AG04449 (cell line): ENCODE measurements at regions of chr1 and their contacts with region 1.

Region 1: GRCh38 chr1:51192213-51192843 is 43.7 kb upstream of the RNF11 start:
- DNase-seq: peak; percentile 28
- H3K4me3 ChIP-seq: no peak overlapping the region
- CTCF ChIP-seq: peak; percentile 75

Region 2: GRCh38 chr1:50750021-50750619 is 442.2 kb before region 1 on chr1:
- CTCF ChIA-PET with region 1: interaction called, 15 read pairs
- POLR2A ChIA-PET with region 1: no interaction called
- DNase-seq: no peak
- H3K4me3 ChIP-seq: no peak overlapping the region
- CTCF ChIP-seq: peak; percentile 44

Region 3: DNA sequence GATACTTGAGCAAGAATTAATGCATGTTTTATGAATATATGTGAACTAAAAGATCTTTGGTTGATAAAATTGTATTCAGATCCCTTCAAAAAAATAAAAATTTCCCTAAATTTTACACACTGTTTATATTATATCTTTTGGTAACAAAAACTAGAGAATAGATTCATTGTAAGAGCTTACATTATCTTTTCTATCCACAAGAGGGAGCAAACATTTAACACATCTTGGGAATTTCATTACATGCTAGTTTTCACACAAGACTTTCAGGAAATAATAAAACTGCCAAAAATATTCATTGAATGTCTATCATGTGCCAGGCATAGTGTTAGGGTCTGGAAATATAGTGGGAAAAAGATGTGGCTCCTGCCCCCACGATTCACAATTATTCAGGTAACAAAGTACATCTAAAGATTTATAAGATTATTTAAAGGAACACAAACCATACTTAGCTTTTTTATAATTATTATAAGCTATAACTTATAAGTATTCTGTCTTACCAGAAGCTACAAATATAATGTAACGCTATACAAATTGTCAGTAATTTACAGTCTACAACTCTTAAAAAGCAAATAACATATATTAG is 262.9 kb before region 1 on chr1:
- CTCF ChIA-PET with region 1: interaction called, 129 read pairs
- POLR2A ChIA-PET with region 1: no interaction called
- DNase-seq: peak; percentile 5
- H3K4me3 ChIP-seq: no peak overlapping the region
- CTCF ChIP-seq: peak; percentile 20

Region 4: DNA sequence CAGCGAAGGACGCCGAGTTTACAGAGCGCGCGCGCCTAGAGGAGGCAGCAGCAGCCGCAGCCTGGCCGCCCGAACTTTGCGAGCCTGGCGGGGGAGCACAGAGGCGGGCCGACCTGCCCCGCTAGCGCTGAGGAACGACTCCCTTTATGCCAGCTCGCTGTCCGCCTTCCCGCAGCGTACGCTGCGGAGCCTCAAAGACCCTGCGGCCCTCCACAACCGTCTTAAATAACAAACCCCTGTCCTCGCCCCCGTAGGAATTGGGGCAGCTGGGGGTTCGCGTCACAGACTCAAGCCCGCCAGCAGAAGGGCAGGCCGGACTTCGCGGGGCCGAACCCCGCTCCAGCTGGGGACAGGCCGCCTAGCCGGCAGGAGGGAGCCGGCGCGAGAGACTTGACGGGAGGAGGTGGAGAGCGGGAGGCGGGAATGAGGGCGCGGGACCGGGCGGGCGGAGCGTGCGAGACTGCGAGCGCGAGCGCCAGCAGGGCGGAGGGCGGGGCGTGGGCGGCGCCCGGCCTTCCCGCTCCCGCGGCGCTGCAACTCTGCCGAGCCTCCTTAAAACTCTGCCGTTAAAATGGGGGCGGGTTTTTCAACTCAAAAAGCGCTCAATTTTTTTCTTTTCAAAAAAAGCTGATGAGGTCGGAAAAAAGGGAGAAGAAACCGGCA is 224.0 kb before region 1 on chr1:
- CTCF ChIA-PET with region 1: interaction called, 17 read pairs
- POLR2A ChIA-PET with region 1: no interaction called
- DNase-seq: no peak
- H3K4me3 ChIP-seq: peak overlapping the region; percentile 83
- CTCF ChIP-seq: peak; percentile 56

Region 5: DNA sequence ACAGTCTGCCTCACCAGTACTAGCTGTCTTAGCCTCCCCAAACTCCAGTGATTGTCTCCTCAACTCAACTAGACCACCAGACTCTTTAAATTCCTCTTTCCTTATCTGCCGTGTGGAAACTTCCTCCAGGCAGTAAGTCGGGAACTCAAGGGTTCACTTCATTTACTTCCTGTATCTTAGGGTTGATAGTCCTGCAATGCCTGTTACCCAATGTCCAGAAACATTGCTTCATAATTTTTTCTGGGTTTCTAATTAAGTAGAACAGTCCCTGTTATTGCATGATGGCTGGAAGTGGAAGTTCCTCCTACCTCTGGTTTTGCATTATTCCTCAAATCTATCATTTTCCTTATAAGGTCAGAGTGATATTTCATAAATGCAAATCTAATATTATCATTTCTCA is 17.1 kb before region 1 on chr1:
- CTCF ChIA-PET with region 1: interaction called, 64 read pairs
- POLR2A ChIA-PET with region 1: no interaction called
- DNase-seq: no peak
- H3K4me3 ChIP-seq: no peak overlapping the region
- CTCF ChIP-seq: no peak

Region 6: DNA sequence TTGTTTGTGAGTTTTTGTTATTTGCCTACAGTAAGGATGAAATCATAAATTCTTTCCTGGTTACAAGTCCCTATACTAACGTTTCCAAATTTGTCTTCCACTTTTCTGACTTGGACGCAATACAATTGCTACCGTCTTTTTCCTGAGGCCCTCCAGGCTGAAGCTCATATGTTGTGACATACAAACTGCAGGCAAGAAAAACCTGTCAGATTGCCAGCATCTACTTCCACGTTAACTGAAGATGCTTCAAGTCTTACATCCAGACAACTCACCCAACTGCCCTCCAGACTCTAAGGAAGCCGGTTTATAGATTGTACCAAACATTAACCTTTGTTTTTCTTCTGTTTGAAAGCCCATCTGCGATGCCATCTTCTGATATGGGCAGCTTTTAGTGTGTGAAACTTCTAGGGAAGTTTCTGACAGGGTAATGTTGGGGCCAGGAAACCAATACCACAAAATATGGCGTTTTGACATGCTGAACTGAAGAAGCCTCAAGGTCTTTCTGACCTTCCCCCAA is 22.3 kb after region 1 on chr1:
- CTCF ChIA-PET with region 1: interaction called, 30 read pairs
- POLR2A ChIA-PET with region 1: no interaction called
- DNase-seq: peak; percentile 65
- H3K4me3 ChIP-seq: no peak overlapping the region
- CTCF ChIP-seq: no peak

Region 7: GRCh38 chr1:51535006-51535592 is 342.8 kb after region 1 on chr1:
- CTCF ChIA-PET with region 1: interaction called, 11 read pairs
- POLR2A ChIA-PET with region 1: no interaction called
- DNase-seq: no peak
- H3K4me3 ChIP-seq: no peak overlapping the region
- CTCF ChIP-seq: peak; percentile 70